Activated naive CD4-positive, alpha-beta T cell treated with anti-CD3 and anti-CD28 coated beads, Interleukin-2, amount 10 ng/mL, durations not matched to agents 7 days and 5 days (primary cell): ENCODE measurements at regions of chr14 and their contacts with region 1.

Region 1: GRCh38 chr14:105203057-105203531 is 22.0 kb upstream of the NUDT14 start:
- DNase-seq: peak; percentile 74
- H3K4me3 Mint-ChIP-seq: no peak overlapping the region
- H3K27ac Mint-ChIP-seq: no peak overlapping the region
- H3K4me1 Mint-ChIP-seq: peaks cover 25% of the 10 kb centered on the region
- H3K27me3 Mint-ChIP-seq: peaks cover 49% of the 10 kb centered on the region

Region 2: DNA sequence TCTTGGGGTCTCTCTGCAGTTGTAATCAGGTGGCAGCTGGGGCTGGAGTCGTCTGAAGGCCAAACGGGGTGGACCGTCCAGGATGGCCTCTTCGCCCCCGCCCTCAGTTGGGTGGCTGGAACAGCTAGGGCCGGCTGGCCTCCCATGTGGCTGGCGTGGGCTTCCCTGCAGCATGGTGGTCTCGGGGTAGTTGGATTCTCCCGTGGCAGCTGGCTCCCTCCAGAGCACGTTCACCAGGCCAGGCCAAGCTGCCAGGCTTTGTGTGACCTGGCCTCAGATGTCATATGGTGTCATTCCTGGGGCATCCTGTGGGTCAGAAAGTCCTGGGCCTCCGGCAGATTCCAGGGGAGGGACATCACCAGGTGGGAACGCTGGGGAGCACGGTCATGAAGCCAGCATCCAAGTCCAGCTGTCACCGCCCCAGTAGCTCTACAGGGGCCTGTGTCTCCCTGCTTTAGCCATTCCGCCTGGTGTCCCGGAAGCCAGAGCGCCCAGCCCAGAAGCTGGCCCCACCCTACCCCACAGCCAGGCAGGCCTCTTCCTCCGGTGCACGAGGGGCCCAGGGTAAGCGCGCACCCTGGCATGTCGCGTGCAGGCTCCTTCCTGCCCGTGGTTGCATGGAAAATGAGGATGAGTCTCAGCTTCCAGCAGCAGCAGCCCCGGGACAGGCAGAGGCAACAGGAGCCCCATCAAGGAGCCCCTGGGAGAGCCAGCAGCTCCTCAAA is 20.6 kb before region 1 on chr14:
- CTCF ChIA-PET with region 1: no interaction called
- DNase-seq: peak; percentile 51
- H3K4me3 Mint-ChIP-seq: peak overlapping the region; percentile 53
- H3K27ac Mint-ChIP-seq: peak overlapping the region; percentile 62
- H3K4me1 Mint-ChIP-seq: peaks cover 24% of the 10 kb centered on the region
- H3K27me3 Mint-ChIP-seq: peaks cover 61% of the 10 kb centered on the region

Region 3: GRCh38 chr14:105351920-105352851 is 149.1 kb after region 1 on chr14:
- CTCF ChIA-PET with region 1: interaction called, 31 read pairs
- DNase-seq: peak; percentile 94
- H3K4me3 Mint-ChIP-seq: no peak overlapping the region
- H3K27ac Mint-ChIP-seq: no peak overlapping the region
- H3K4me1 Mint-ChIP-seq: peaks cover 3% of the 10 kb centered on the region
- H3K27me3 Mint-ChIP-seq: no peaks in the 10 kb centered on the region